ENCODE measurements at regions of chr19 and their contacts with region 1.

Region 1: GRCh38 chr19:39846176-39846677 is at the start of gene FBL:
- DNase-seq: peak; percentile 98
- ATAC-seq: peak; percentile 93
- H3K4me3 Mint-ChIP-seq: peak within 1 kb of the TSS; percentile 91
- H3K27ac Mint-ChIP-seq: peak within 1 kb of the TSS; percentile 90
- H3K4me1 Mint-ChIP-seq: peaks cover 46% of the 10 kb centered on the region
- H3K27me3 Mint-ChIP-seq: no peaks in the 10 kb centered on the region
- total RNA-seq, gene FBL: 385 to 399 TPM

Region 2: GRCh38 chr19:39557441-39558151 is 288.6 kb before region 1 on chr19:
- CTCF ChIA-PET with region 1: interaction called, 10 read pairs
- POLR2A ChIA-PET with region 1: no interaction called
- DNase-seq: no peak
- ATAC-seq: peak; percentile 59
- H3K4me3 Mint-ChIP-seq: peak overlapping the region; percentile 55
- H3K27ac Mint-ChIP-seq: peak overlapping the region; percentile 90
- H3K4me1 Mint-ChIP-seq: peaks cover 31% of the 10 kb centered on the region
- H3K27me3 Mint-ChIP-seq: peaks cover 3% of the 10 kb centered on the region

Region 3: DNA sequence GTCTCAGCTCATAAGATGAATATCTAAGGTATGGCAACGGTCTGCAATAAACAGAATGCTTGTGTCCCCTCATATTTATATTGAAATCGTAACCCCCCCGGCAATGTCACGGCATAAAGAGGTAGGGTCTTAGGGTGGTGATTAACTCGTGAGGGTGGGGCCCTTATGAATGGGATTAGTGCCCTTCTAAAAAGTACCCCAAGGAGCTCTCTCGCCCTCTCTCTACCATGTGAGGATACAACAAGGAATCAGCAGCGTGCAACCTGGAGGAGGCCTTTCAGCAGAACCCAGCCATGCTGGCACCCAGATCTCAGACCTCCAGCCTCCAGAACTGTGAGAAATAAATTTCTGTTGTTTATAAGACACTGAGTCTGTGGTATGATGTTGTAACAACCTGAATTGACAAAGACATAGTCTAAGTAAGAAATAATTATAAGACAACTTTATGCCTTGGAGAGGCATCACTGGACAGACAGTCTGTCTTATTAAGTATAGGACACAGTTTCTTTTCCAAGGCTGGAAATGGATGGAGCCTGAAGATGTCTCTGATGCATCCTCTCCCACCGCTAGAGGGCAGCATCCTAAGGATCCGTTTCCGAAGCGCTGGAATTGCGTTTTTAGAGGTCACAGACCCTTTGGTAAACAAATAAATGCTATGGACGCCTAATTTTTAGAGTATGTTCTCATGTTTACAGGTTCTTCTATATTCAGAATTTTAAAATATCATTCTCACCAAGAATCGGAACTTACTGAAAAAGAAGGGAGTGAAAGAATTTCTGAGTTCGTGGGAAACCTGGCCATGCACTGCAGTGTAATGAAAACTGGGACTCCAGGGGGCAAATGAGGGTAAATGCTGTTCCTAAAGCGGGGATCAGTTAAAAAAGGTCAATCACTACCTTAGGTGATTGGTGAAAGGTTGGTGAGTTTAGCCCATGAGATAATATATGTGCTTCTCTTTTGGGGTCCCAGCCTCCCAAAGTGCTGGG is 80.8 kb before region 1 on chr19:
- CTCF ChIA-PET with region 1: interaction called, 45 read pairs
- POLR2A ChIA-PET with region 1: no interaction called
- DNase-seq: peak; percentile 46
- ATAC-seq: no peak
- H3K4me3 Mint-ChIP-seq: no peak overlapping the region
- H3K27ac Mint-ChIP-seq: no peak overlapping the region
- H3K4me1 Mint-ChIP-seq: no peaks in the 10 kb centered on the region
- H3K27me3 Mint-ChIP-seq: peaks cover 18% of the 10 kb centered on the region

Region 4: GRCh38 chr19:39792999-39793546 is 53.2 kb before region 1 on chr19:
- CTCF ChIA-PET with region 1: interaction called, 235 read pairs
- POLR2A ChIA-PET with region 1: interaction called, 4 read pairs
- DNase-seq: peak; percentile 82
- ATAC-seq: peak; percentile 96
- H3K4me3 Mint-ChIP-seq: peak overlapping the region; percentile 76
- H3K27ac Mint-ChIP-seq: no peak overlapping the region
- H3K4me1 Mint-ChIP-seq: peaks cover 19% of the 10 kb centered on the region
- H3K27me3 Mint-ChIP-seq: peaks cover 22% of the 10 kb centered on the region

Region 5: DNA sequence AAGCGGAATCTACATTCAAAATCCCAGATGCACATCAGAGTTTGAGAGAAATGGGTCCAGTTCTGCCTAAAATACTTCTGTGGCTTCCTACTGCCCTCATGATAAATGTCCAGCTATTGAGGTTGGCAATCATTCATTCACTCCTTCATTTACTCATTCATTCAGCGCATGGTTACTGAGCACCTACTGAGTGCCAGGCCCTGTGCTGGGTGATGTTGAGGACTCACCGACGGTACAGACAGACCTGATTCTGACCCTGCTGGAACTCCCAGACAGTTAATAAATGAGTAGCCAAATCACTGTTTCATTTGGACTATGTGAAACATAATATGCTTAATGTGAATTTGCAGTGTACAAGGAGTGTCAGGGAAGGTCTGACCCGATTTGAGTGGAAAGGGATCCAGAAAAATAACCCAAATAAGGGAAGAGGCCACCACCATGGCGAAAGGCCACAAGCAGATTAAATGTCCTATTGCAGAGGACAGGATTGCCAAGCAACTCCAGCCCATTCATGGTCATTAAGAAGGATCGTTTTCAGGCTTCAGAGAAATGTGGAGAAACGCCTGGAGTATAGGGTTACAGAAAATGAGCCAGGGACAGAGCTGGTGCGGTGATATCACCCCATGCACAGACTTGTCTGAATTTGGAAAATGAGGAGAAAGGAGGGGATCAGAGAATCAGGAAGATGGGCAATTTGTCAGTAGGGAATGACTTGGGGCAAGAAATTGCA is 32.8 kb before region 1 on chr19:
- CTCF ChIA-PET with region 1: interaction called, 18 read pairs
- POLR2A ChIA-PET with region 1: no interaction called
- DNase-seq: no peak
- ATAC-seq: no peak
- H3K4me3 Mint-ChIP-seq: no peak overlapping the region
- H3K27ac Mint-ChIP-seq: no peak overlapping the region
- H3K4me1 Mint-ChIP-seq: peaks cover 2% of the 10 kb centered on the region
- H3K27me3 Mint-ChIP-seq: no peaks in the 10 kb centered on the region

Region 6: GRCh38 chr19:39833464-39834286 is 12.6 kb before region 1 on chr19 and contains the start of gene DYRK1B:
- CTCF ChIA-PET with region 1: interaction called, 70 read pairs
- POLR2A ChIA-PET with region 1: interaction called, 9 read pairs
- DNase-seq: peak; percentile 99
- ATAC-seq: peak; percentile 91
- H3K4me3 Mint-ChIP-seq: peak within 1 kb of the TSS; percentile 67
- H3K27ac Mint-ChIP-seq: peak within 1 kb of the TSS; percentile 83
- H3K4me1 Mint-ChIP-seq: peaks cover 34% of the 10 kb centered on the region
- H3K27me3 Mint-ChIP-seq: no peaks in the 10 kb centered on the region
- total RNA-seq, gene DYRK1B: 7.5 to 8.5 TPM

Region 7: GRCh38 chr19:39906283-39906682 is 60.1 kb after region 1 on chr19:
- CTCF ChIA-PET with region 1: no interaction called
- POLR2A ChIA-PET with region 1: no interaction called
- DNase-seq: no peak
- ATAC-seq: no peak
- H3K4me3 Mint-ChIP-seq: no peak overlapping the region
- H3K27ac Mint-ChIP-seq: peak overlapping the region; percentile 6
- H3K4me1 Mint-ChIP-seq: peaks cover 6% of the 10 kb centered on the region
- H3K27me3 Mint-ChIP-seq: no peaks in the 10 kb centered on the region

Region 8: GRCh38 chr19:39916851-39917396 is 70.7 kb after region 1 on chr19:
- CTCF ChIA-PET with region 1: no interaction called
- POLR2A ChIA-PET with region 1: no interaction called
- DNase-seq: no peak
- ATAC-seq: no peak
- H3K4me3 Mint-ChIP-seq: no peak overlapping the region
- H3K27ac Mint-ChIP-seq: no peak overlapping the region
- H3K4me1 Mint-ChIP-seq: no peaks in the 10 kb centered on the region
- H3K27me3 Mint-ChIP-seq: no peaks in the 10 kb centered on the region

Region 9: GRCh38 chr19:39951686-39952085 is 105.5 kb after region 1 on chr19:
- CTCF ChIA-PET with region 1: no interaction called
- POLR2A ChIA-PET with region 1: no interaction called
- DNase-seq: no peak
- ATAC-seq: no peak
- H3K4me3 Mint-ChIP-seq: no peak overlapping the region
- H3K27ac Mint-ChIP-seq: peak overlapping the region; percentile 95
- H3K4me1 Mint-ChIP-seq: peaks cover 56% of the 10 kb centered on the region
- H3K27me3 Mint-ChIP-seq: no peaks in the 10 kb centered on the region

Measured in activated CD8-positive, alpha-beta T cell treated with anti-CD3 and anti-CD28 coated beads, Interleukin-2, amount 10 ng/mL, durations not matched to agents 7 days and 5 days (primary cell).